ENCODE measurements at regions of chr3 and their contacts with region 1.

Region 1: DNA sequence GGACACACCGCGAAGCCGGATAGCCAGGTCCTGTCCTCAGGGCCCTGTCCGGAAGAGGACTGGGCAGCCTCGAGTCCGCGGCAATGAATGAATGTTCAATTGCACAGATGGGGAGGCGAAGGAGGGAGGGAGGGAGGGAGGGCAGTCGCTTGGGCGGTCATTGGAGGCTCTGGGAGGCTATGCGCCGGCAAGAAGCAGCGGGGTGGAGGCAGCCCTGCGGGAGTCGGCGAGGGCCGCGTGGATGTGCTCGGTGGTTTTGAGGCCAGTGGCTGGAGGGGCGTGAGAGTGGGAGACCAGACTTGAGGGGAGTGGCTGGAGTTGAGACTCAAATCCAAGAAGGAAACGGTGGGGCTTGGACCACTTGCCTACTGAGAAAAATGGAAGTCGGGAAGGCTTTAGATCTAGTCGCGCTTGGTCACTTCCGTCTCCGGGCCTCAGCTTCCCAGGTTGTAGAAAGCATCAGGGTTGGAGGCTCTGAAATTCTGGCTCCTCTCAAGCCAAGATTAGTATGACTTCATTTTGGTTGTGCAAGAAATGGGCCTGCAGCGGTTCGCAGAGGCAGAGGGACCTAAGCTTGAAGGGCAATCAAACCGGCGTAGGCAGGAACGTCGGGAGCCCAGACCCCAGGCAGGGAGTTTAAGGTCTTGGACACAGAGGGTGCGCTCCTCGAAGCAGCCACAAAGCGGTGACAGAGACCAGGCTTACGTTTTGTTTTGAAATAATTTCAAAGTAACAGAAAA is 21.1 kb upstream of the PLXND1 start:
- DNase-seq: peak; percentile 78
- ATAC-seq: peak; percentile 52
- H3K4me3 ChIP-seq: peak overlapping the region; percentile 49 to 86 (median 72)
- H3K4me3 Mint-ChIP-seq: peak overlapping the region; percentile 98
- H3K27ac ChIP-seq: peak overlapping the region in 1 of 2 donors; percentile 37
- H3K27ac Mint-ChIP-seq: peak overlapping the region; percentile 88
- H3K4me1 ChIP-seq: peaks cover 5 to 18% of the 10 kb centered on the region in 2 donors
- H3K4me1 Mint-ChIP-seq: peaks cover 17% of the 10 kb centered on the region
- H3K27me3 ChIP-seq: no peaks in the 10 kb centered on the region
- H3K27me3 Mint-ChIP-seq: no peaks in the 10 kb centered on the region
- CTCF ChIP-seq: peak; percentile 77

Region 2: GRCh38 chr3:129052675-129053074 is 574.9 kb before region 1 on chr3:
- CTCF ChIA-PET with region 1: no interaction called
- POLR2A ChIA-PET with region 1: no interaction called
- intact Hi-C with region 1: no loop called
- DNase-seq: no peak
- ATAC-seq: no peak
- H3K4me3 ChIP-seq: no peak overlapping the region
- H3K4me3 Mint-ChIP-seq: no peak overlapping the region
- H3K27ac ChIP-seq: no peak overlapping the region
- H3K27ac Mint-ChIP-seq: no peak overlapping the region
- H3K4me1 ChIP-seq: peaks cover 4 to 7% of the 10 kb centered on the region in 2 donors
- H3K4me1 Mint-ChIP-seq: peaks cover 7% of the 10 kb centered on the region
- H3K27me3 ChIP-seq: peaks cover 0 to 10% (median 2%) of the 10 kb centered on the region in 4 experiments
- H3K27me3 Mint-ChIP-seq: peaks cover 31% of the 10 kb centered on the region
- CTCF ChIP-seq: no peak

Region 3: GRCh38 chr3:129383292-129383860 is 244.2 kb before region 1 on chr3:
- CTCF ChIA-PET with region 1: interaction called, 4 read pairs
- POLR2A ChIA-PET with region 1: no interaction called
- intact Hi-C with region 1: loop called (anchors 5 kb)
- DNase-seq: peak; percentile 61
- ATAC-seq: peak; percentile 93
- H3K4me3 ChIP-seq: no peak overlapping the region
- H3K4me3 Mint-ChIP-seq: no peak overlapping the region
- H3K27ac ChIP-seq: no peak overlapping the region
- H3K27ac Mint-ChIP-seq: no peak overlapping the region
- H3K4me1 ChIP-seq: no peaks in the 10 kb centered on the region
- H3K4me1 Mint-ChIP-seq: no peaks in the 10 kb centered on the region
- H3K27me3 ChIP-seq: no peaks in the 10 kb centered on the region
- H3K27me3 Mint-ChIP-seq: no peaks in the 10 kb centered on the region
- CTCF ChIP-seq: peak; percentile 78

Region 4: DNA sequence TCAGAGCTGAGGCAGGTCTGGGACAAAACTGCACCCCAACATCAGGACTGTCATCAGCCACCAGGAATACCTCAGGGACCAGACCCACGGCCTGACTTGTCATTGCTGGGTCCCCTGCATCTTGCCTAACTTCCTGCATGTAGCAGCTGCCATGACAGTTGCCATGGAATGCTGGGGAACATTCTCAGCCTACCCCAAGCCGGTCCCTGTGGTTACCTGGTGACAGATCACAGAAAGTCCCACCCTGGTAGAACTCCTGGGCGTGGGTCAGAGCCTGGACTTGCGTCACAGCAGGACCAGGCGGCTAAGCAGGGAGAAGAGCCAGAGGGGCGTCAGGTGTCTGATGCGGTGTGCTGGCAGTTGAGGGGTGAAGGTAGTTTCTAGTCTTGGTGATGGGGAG is 79.5 kb before region 1 on chr3:
- CTCF ChIA-PET with region 1: no interaction called
- POLR2A ChIA-PET with region 1: no interaction called
- intact Hi-C with region 1: no loop called
- DNase-seq: no peak
- ATAC-seq: no peak
- H3K4me3 ChIP-seq: no peak overlapping the region
- H3K4me3 Mint-ChIP-seq: no peak overlapping the region
- H3K27ac ChIP-seq: no peak overlapping the region
- H3K27ac Mint-ChIP-seq: no peak overlapping the region
- H3K4me1 ChIP-seq: no peaks in the 10 kb centered on the region
- H3K4me1 Mint-ChIP-seq: no peaks in the 10 kb centered on the region
- H3K27me3 ChIP-seq: no peaks in the 10 kb centered on the region
- H3K27me3 Mint-ChIP-seq: peaks cover 5% of the 10 kb centered on the region
- CTCF ChIP-seq: no peak

Region 5: DNA sequence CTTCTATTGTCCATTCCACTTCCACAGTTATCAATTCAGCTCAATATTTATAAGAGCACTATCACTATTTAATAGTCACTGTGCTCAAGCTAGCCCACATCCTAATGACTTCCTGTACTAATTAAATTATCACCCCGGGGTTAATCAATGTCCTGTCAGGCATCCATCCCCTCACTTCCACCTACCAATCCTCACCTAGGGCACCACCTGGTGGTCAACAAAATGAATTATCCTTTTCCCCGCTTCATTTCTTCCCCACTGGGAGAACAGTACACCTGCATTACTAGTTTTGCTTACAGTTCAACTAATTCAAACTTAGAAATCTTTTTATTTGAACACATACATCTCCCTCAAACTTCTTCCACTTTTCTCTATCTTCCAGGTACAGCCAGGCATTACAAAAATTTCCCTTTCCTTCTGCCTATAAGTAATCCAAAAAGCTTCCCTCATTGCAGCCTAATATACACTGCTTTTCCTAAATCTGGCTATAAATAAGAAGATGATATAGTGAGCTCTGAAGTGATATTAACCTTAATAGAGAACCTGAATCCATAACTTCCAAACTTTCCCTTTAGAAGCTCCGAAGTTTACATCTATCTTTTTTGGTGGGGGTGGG is 197.4 kb after region 1 on chr3:
- CTCF ChIA-PET with region 1: interaction called, 51 read pairs
- POLR2A ChIA-PET with region 1: interaction called, 5 read pairs
- intact Hi-C with region 1: no loop called
- DNase-seq: peak; percentile 74
- ATAC-seq: peak; percentile 50
- H3K4me3 ChIP-seq: no peak overlapping the region
- H3K4me3 Mint-ChIP-seq: no peak overlapping the region
- H3K27ac ChIP-seq: no peak overlapping the region
- H3K27ac Mint-ChIP-seq: no peak overlapping the region
- H3K4me1 ChIP-seq: peaks cover 11 to 12% of the 10 kb centered on the region in 2 donors
- H3K4me1 Mint-ChIP-seq: peaks cover 41% of the 10 kb centered on the region
- H3K27me3 ChIP-seq: no peaks in the 10 kb centered on the region
- H3K27me3 Mint-ChIP-seq: no peaks in the 10 kb centered on the region
- CTCF ChIP-seq: peak; percentile 80

Region 6: GRCh38 chr3:129934234-129935123 is 306.9 kb after region 1 on chr3:
- CTCF ChIA-PET with region 1: interaction called, 10 read pairs
- POLR2A ChIA-PET with region 1: no interaction called
- intact Hi-C with region 1: no loop called
- DNase-seq: peak; percentile 63
- ATAC-seq: peak; percentile 45
- H3K4me3 ChIP-seq: no peak overlapping the region
- H3K4me3 Mint-ChIP-seq: no peak overlapping the region
- H3K27ac ChIP-seq: no peak overlapping the region
- H3K27ac Mint-ChIP-seq: no peak overlapping the region
- H3K4me1 ChIP-seq: peaks cover 2 to 4% of the 10 kb centered on the region in 2 donors
- H3K4me1 Mint-ChIP-seq: peaks cover 8% of the 10 kb centered on the region
- H3K27me3 ChIP-seq: peaks cover 0 to 5% (median 0%) of the 10 kb centered on the region in 4 experiments
- H3K27me3 Mint-ChIP-seq: peaks cover 7% of the 10 kb centered on the region
- CTCF ChIP-seq: peak; percentile 94

Region 7: GRCh38 chr3:130111185-130111864 is 483.7 kb after region 1 on chr3:
- CTCF ChIA-PET with region 1: interaction called, 4 read pairs
- POLR2A ChIA-PET with region 1: no interaction called
- intact Hi-C with region 1: loop called (anchors 5 kb)
- DNase-seq: peak; percentile 98
- ATAC-seq: peak; percentile 100
- H3K4me3 ChIP-seq: peak overlapping the region in 4 of 5 experiments; percentile 69 to 86 (median 77)
- H3K4me3 Mint-ChIP-seq: peak overlapping the region; percentile 99
- H3K27ac ChIP-seq: peak overlapping the region; percentile 88
- H3K27ac Mint-ChIP-seq: peak overlapping the region; percentile 100
- H3K4me1 ChIP-seq: peaks cover 0 to 10% of the 10 kb centered on the region in 2 donors
- H3K4me1 Mint-ChIP-seq: peaks cover 14% of the 10 kb centered on the region
- H3K27me3 ChIP-seq: no peaks in the 10 kb centered on the region
- H3K27me3 Mint-ChIP-seq: no peaks in the 10 kb centered on the region
- CTCF ChIP-seq: no peak